ENCODE measurements at regions of chrX and their contacts with region 1.

Region 1: GRCh38 chrX:15645258-15645657 is 19.3 kb downstream of the CLTRN start:
- DNase-seq: no peak
- ATAC-seq: no peak
- H3K4me3 ChIP-seq: no peak overlapping the region
- H3K27ac ChIP-seq: no peak overlapping the region
- H3K4me1 ChIP-seq: no peaks in the 10 kb centered on the region
- H3K27me3 ChIP-seq: no peaks in the 10 kb centered on the region

Region 2: GRCh38 chrX:15594371-15594770 is 50.9 kb before region 1 on chrX:
- intact Hi-C with region 1: loop called in 1 of 4 experiments (anchors 10 kb)
- DNase-seq: no peak
- ATAC-seq: no peak
- H3K4me3 ChIP-seq: no peak overlapping the region
- H3K27ac ChIP-seq: no peak overlapping the region
- H3K4me1 ChIP-seq: peaks cover 1% of the 10 kb centered on the region
- H3K27me3 ChIP-seq: no peaks in the 10 kb centered on the region

Measured in right cardiac atrium (tissue), 5 donors.